Left cardiac atrium (tissue), 4 donors: ENCODE measurements at regions of chr20 and their contacts with region 1.

Region 1: GRCh38 chr20:11544029-11544678 is 373.5 kb upstream of the BTBD3 start:
- DNase-seq: no peak
- ATAC-seq: peak; percentile 75 to 85

Region 2: GRCh38 chr20:9616833-9617489 is 1927.2 kb before region 1 on chr20:
- intact Hi-C with region 1: loop called in 1 of 2 experiments (anchors 10 kb)
- DNase-seq: peak; percentile 68
- ATAC-seq: peak; percentile 53 to 77

Region 3: GRCh38 chr20:9978397-9979004 is 1565.7 kb before region 1 on chr20:
- intact Hi-C with region 1: loop called in 1 of 2 experiments (anchors 10 kb)
- DNase-seq: no peak
- ATAC-seq: peak; percentile 91 to 97

Region 4: DNA sequence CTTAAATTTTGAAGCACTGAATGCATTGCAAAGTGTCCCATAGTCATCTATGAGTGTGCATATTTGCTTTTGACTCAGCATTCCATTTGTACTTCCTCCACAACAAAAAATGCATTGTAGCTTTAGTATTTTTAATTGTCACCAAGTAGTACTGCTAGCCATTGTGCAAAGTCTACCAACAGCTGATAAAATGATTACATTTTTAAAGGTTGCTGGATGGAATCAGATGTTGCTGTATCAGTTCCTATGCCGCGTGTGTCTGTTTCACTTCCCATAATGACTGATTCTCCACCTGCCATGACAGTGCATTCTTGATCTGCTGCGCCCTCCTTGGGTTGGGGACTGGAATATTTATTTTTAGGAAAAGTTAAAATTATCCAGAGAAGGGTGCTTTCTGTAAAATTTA is 1067.8 kb before region 1 on chr20:
- intact Hi-C with region 1: loop called in 1 of 2 experiments (anchors 5 kb)
- DNase-seq: no peak
- ATAC-seq: peak in 1 of 2 donors; percentile 47

Region 5: GRCh38 chr20:10553326-10553984 is 990.7 kb before region 1 on chr20:
- intact Hi-C with region 1: loop called in 1 of 2 experiments (anchors 2 kb)
- DNase-seq: peak; percentile 75
- ATAC-seq: peak; percentile 70 to 75

Region 6: GRCh38 chr20:11274141-11274594 is 270.0 kb before region 1 on chr20:
- intact Hi-C with region 1: loop called in 1 of 2 experiments (anchors 5 kb)
- DNase-seq: peak; percentile 25
- ATAC-seq: peak; percentile 89 to 90

Region 7: DNA sequence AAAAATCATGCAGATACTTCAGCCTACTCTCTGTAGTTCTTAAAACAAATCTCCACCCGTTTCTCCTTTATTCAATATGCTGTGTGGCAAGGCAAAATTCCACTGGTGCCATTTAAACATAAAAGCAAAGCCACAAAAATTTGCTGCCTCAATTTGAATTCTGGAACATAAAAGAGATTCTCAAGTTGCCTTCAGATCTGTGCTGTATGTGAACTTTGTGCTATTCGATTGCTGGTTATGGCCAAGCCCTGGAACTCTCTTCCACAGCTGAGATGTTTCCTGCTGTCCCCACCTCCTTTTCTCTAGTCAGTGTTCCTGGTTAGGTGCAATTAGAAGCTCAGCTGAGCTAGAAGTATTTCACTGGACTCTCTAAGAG is 21.8 kb before region 1 on chr20:
- intact Hi-C with region 1: no loop called
- DNase-seq: no peak
- ATAC-seq: no peak

Region 8: GRCh38 chr20:11740975-11741374 is 196.8 kb after region 1 on chr20:
- intact Hi-C with region 1: no loop called
- DNase-seq: no peak
- ATAC-seq: no peak

Region 9: GRCh38 chr20:11921321-11921720 is 377.2 kb after region 1 on chr20:
- intact Hi-C with region 1: no loop called
- DNase-seq: no peak
- ATAC-seq: no peak

Region 10: GRCh38 chr20:12068121-12068520 is 524.0 kb after region 1 on chr20:
- intact Hi-C with region 1: no loop called
- DNase-seq: no peak
- ATAC-seq: no peak